ENCODE measurements at regions of chr11 and their contacts with region 1.

Region 1: DNA sequence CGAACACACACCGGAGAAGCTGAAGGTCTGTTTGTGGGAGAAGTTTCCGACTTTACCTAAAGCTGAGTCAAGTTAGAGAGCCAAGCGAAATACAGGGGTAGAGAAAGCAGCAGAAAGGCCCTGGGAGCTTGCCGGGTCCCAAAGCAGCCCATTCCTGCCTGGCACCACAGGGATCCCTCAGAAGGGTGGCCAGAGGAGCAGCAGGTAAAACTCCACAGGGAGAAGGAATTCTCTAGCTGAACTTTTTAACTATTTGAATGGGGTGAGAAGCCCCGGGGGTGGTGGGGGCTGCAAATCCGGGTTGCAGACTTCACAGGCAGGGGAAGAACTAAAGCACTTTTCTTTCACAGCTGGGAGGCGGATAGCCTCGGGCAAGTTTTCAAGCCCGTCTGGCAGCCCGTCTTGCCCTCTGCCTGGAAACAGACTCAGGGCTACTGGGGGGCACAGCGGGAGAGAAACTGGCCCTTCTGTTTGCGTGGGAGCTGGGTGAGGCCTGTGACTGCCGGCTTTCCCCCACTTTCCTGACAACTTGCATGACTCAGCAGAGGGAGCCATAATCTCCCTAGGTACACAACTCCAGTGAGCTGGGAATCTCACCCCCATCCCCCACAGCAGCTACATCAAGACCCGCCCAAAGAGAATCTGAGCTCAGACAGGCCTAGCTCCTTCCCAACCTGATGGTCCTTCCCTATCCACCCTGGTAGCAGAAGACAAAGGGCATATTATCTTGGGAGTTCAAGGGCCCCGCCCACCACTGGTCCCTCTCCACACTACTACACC is 311.0 kb downstream of the SBF2 start:
- DNase-seq: peak; percentile 40
- ATAC-seq: no peak; the same call in 1 of the 2 replicates
- H3K4me3 ChIP-seq: no peak overlapping the region
- H3K27ac ChIP-seq: peak overlapping the region; percentile 35; the same call in 1 of the 2 replicates
- H3K4me1 ChIP-seq: peaks cover 18% of the 10 kb centered on the region
- H3K27me3 ChIP-seq: no peaks in the 10 kb centered on the region
- CTCF ChIP-seq: no peak
- POLR2A ChIP-seq: no peak
- RAD21 ChIP-seq: no peak

Region 2: DNA sequence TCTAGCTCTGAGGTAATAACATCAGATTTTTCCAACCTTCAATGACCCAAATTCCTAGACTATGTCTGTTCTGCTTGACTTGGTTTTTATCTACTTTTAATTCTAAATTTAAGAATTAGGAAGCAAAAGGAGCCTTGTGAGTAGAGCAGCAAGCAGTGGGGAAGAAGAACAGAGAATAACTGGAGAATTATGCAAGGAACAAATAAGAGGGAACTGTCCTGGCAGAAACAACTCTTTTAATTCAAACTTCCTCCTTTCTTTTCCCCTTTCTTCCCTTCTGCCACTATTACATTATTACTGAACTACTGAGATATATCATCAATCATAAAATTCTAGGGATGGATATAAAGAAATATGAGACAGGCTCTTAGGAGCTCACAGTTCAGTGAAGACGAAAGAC is 34.9 kb after region 1 on chr11:
- CTCF ChIA-PET with region 1: no interaction called
- POLR2A ChIA-PET with region 1: no interaction called
- dilution Hi-C with region 1: no loop called
- in situ Hi-C with region 1: no loop called
- intact Hi-C with region 1: loop called (anchors 1 kb)
- DNase-seq: no peak
- ATAC-seq: no peak
- H3K4me3 ChIP-seq: no peak overlapping the region
- H3K27ac ChIP-seq: no peak overlapping the region
- H3K4me1 ChIP-seq: peaks cover 4% of the 10 kb centered on the region; the same call in 1 of the 2 replicates
- H3K27me3 ChIP-seq: no peaks in the 10 kb centered on the region
- CTCF ChIP-seq: no peak
- POLR2A ChIP-seq: no peak
- RAD21 ChIP-seq: no peak